HepG2 (cell line): ENCODE measurements at regions of chr6 and their contacts with region 1.

Region 1: GRCh38 chr6:75044846-75045245 is 161.0 kb downstream of the COL12A1 start:
- DNase-seq: no peak
- ATAC-seq: no peak
- H3K4me3 ChIP-seq: no peak overlapping the region
- H3K27ac ChIP-seq: no peak overlapping the region
- H3K4me1 ChIP-seq: no peaks in the 10 kb centered on the region
- H3K27me3 ChIP-seq: no peaks in the 10 kb centered on the region
- CTCF ChIP-seq: no peak
- EP300 ChIP-seq: no peak
- POLR2A ChIP-seq: no peak
- RAD21 ChIP-seq: no peak

Region 2: DNA sequence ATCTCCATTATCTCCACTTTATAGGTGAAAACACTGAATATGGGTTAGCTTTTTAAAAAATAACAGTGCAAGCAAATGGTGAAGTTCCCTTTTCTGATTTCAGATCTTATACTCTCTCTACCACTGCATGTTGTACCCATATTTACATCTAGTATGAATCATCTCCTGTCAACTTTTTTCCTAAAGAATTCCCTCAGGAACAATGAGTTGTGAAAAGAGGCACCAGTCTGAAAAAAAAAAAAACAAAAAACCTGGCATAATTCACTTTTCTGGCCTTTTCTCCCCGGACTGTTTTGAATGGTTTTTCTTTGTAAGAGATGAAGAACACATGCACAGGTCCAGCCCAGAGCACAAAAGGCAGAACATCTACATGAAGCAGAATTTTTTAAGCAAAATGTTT is 435.0 kb before region 1 on chr6:
- CTCF ChIA-PET with region 1: no interaction called
- POLR2A ChIA-PET with region 1: no interaction called
- in situ Hi-C with region 1: no loop called
- intact Hi-C with region 1: loop called (anchors 5 kb)
- DNase-seq: no peak
- ATAC-seq: no peak
- H3K4me3 ChIP-seq: no peak overlapping the region
- H3K27ac ChIP-seq: no peak overlapping the region
- H3K4me1 ChIP-seq: no peaks in the 10 kb centered on the region
- H3K27me3 ChIP-seq: no peaks in the 10 kb centered on the region
- CTCF ChIP-seq: no peak
- EP300 ChIP-seq: no peak
- POLR2A ChIP-seq: no peak
- RAD21 ChIP-seq: no peak

Region 3: DNA sequence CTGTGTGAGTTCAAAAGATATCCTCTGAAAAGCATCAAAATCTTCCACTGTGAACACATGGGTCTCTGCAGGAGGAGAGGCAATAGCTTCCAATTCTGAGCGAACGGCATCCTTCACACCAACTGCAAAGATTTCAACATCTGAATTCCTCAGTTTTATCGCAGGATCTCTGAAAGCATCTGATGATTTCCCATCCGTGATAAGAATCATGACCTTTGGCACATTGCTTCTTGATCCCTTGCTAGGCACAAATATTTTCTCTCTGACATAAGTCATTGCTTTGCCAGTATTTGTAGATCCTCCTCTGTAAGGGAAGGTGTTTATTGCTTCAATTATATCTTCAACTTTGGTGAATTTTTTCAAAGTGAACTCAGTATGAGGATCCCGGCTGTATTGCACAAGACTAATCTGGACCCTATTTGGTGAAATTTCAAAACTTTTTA is 138.3 kb after region 1 on chr6:
- CTCF ChIA-PET with region 1: no interaction called
- POLR2A ChIA-PET with region 1: no interaction called
- in situ Hi-C with region 1: no loop called
- intact Hi-C with region 1: no loop called
- DNase-seq: no peak
- ATAC-seq: no peak
- H3K4me3 ChIP-seq: no peak overlapping the region
- H3K27ac ChIP-seq: no peak overlapping the region
- H3K4me1 ChIP-seq: no peaks in the 10 kb centered on the region
- H3K27me3 ChIP-seq: no peaks in the 10 kb centered on the region; a peak in 1 of 5 replicates
- CTCF ChIP-seq: no peak
- EP300 ChIP-seq: no peak
- POLR2A ChIP-seq: no peak
- RAD21 ChIP-seq: no peak